ENCODE measurements at regions of chr7 and their contacts with region 1.

Region 1: GRCh38 chr7:97513326-97513725 is 218.6 kb upstream of the TAC1 start:
- DNase-seq: no peak
- H3K4me3 Mint-ChIP-seq: no peak overlapping the region
- H3K27ac Mint-ChIP-seq: no peak overlapping the region
- H3K4me1 Mint-ChIP-seq: no peaks in the 10 kb centered on the region
- H3K27me3 Mint-ChIP-seq: peaks cover 41% of the 10 kb centered on the region
- CTCF ChIP-seq: no peak

Region 2: GRCh38 chr7:97430001-97430400 is 83.3 kb before region 1 on chr7:
- CTCF ChIA-PET with region 1: no interaction called
- POLR2A ChIA-PET with region 1: no interaction called
- intact Hi-C with region 1: no loop called
- DNase-seq: no peak
- H3K4me3 Mint-ChIP-seq: no peak overlapping the region
- H3K27ac Mint-ChIP-seq: no peak overlapping the region
- H3K4me1 Mint-ChIP-seq: no peaks in the 10 kb centered on the region
- H3K27me3 Mint-ChIP-seq: peaks cover 22% of the 10 kb centered on the region
- CTCF ChIP-seq: no peak

Region 3: DNA sequence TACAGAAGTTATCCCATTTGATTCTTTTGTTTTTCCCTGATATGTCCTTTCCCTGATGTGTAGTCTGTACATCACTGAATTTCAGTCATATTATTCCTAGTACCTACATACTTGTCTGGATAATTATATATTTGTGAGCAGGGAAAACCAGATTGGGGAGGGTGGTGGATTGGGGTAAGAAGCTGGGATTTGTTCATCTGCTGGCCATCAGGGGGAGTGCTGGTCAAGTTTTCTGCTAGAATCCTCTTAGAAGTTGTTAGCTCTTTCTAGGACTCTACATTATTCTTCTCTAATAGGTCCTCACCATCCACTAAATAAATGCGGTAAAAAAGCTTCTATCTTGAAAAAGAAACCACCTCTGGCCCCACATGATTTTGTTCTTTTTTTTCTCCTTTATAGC is 14.1 kb before region 1 on chr7:
- CTCF ChIA-PET with region 1: interaction called, 11 read pairs
- POLR2A ChIA-PET with region 1: interaction called, 3 read pairs
- intact Hi-C with region 1: no loop called
- DNase-seq: peak; percentile 56
- H3K4me3 Mint-ChIP-seq: no peak overlapping the region
- H3K27ac Mint-ChIP-seq: no peak overlapping the region
- H3K4me1 Mint-ChIP-seq: no peaks in the 10 kb centered on the region
- H3K27me3 Mint-ChIP-seq: peaks cover 31% of the 10 kb centered on the region
- CTCF ChIP-seq: peak; percentile 46

Region 4: GRCh38 chr7:98066934-98067507 is 553.7 kb after region 1 on chr7:
- CTCF ChIA-PET with region 1: no interaction called
- POLR2A ChIA-PET with region 1: no interaction called
- intact Hi-C with region 1: no loop called
- DNase-seq: no peak
- H3K4me3 Mint-ChIP-seq: no peak overlapping the region
- H3K27ac Mint-ChIP-seq: no peak overlapping the region
- H3K4me1 Mint-ChIP-seq: no peaks in the 10 kb centered on the region
- H3K27me3 Mint-ChIP-seq: no peaks in the 10 kb centered on the region
- CTCF ChIP-seq: no peak